WTC11 (cell line): ENCODE measurements at regions of chr3 and their contacts with region 1.

Region 1: DNA sequence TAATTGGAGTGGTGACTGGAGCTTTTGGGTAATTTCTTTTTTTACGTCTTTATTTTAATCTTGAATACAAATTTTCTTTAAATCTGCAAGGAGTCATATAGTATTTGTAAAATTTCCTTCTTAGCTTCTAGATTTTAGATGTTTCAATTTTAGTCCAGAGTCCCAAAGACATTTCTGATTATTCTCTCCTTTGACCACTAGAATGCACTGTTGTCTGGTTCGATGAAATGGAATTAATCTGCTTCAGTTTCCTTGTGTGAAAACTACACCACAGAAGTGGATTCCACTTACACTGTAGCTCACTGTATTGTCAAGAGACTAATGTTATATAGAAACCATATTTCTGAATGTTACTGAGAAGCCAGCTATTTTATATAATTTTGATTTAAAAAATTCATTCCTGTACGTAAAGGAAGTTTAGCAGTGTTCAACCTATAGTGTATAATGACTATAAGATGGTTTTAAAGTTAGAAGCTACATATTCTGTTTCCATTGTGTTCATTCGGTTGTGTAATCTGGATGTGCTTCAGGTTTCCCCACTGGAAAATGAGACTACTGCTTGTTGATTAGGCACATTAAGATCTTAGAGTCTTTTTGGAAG is 6.1 kb downstream of the GRAMD1C start:
- DNase-seq: no peak
- ATAC-seq: no peak; the same call in 1 of the 2 replicates
- H3K4me3 Mint-ChIP-seq: no peak overlapping the region
- H3K27ac Mint-ChIP-seq: no peak overlapping the region
- H3K4me1 Mint-ChIP-seq: peaks cover under 1% of the 10 kb centered on the region; the same call in 1 of the 2 replicates
- H3K27me3 Mint-ChIP-seq: no peaks in the 10 kb centered on the region
- CTCF ChIP-seq: no peak

Region 2: GRCh38 chr3:113912552-113913236 is 68.0 kb after region 1 on chr3:
- CTCF ChIA-PET with region 1: interaction called, 39 read pairs
- POLR2A ChIA-PET with region 1: no interaction called
- DNase-seq: peak; percentile 40
- ATAC-seq: peak; percentile 97
- H3K4me3 Mint-ChIP-seq: no peak overlapping the region
- H3K27ac Mint-ChIP-seq: no peak overlapping the region
- H3K4me1 Mint-ChIP-seq: no peaks in the 10 kb centered on the region
- H3K27me3 Mint-ChIP-seq: no peaks in the 10 kb centered on the region; the same call in 1 of the 2 replicates
- CTCF ChIP-seq: peak; percentile 61